Naive thymus-derived CD4-positive, alpha-beta T cell (primary cell): ENCODE measurements at regions of chr3 and their contacts with region 1.

Region 1: GRCh38 chr3:170089862-170090600 is 52.2 kb downstream of the GPR160 start:
- DNase-seq: no peak
- ATAC-seq: no peak
- H3K4me3 ChIP-seq: no peak overlapping the region
- H3K4me3 Mint-ChIP-seq: no peak overlapping the region
- H3K27ac ChIP-seq: peak overlapping the region; percentile 9
- H3K27ac Mint-ChIP-seq: peak overlapping the region in 7 of 9 donors; percentile 3 to 65 (median 54)
- H3K4me1 ChIP-seq: no peaks in the 10 kb centered on the region
- H3K4me1 Mint-ChIP-seq: peaks cover 0 to 19% (median 9%) of the 10 kb centered on the region in 7 donors
- H3K27me3 ChIP-seq: no peaks in the 10 kb centered on the region
- H3K27me3 Mint-ChIP-seq: no peaks in the 10 kb centered on the region

Region 2: DNA sequence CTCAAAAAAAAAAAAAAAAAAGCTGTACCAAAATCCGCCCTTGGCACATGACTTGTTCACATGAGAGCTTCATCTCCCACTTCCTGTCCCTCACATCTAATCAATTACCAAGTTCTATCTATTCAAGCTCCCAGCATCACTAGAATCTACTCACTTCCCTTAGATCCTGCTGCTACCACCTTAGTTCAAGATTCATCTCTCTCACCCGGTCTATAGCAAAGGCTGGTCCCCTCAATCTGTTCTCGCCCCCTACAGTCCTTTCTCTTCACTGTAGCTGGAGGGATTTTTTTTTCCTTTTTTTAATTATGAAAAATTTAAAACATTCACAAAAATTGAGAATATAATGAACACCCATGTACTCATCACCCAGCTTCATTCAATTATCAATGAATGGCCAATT is 68.9 kb before region 1 on chr3:
- CTCF ChIA-PET with region 1: no interaction called
- POLR2A ChIA-PET with region 1: no interaction called
- intact Hi-C with region 1: no loop called
- DNase-seq: peak in 6 of 9 donors; percentile 21 to 48 (median 40)
- ATAC-seq: peak; percentile 61
- H3K4me3 ChIP-seq: no peak overlapping the region
- H3K4me3 Mint-ChIP-seq: peak overlapping the region in 7 of 10 donors; percentile 3 to 71 (median 42)
- H3K27ac ChIP-seq: no peak overlapping the region
- H3K27ac Mint-ChIP-seq: peak overlapping the region in 8 of 9 donors; percentile 18 to 92 (median 73)
- H3K4me1 ChIP-seq: peaks cover 0 to 9% of the 10 kb centered on the region in 2 donors
- H3K4me1 Mint-ChIP-seq: peaks cover 10 to 64% (median 30%) of the 10 kb centered on the region in 7 donors
- H3K27me3 ChIP-seq: no peaks in the 10 kb centered on the region
- H3K27me3 Mint-ChIP-seq: peaks cover 0 to 17% (median 0%) of the 10 kb centered on the region in 5 donors

Region 3: DNA sequence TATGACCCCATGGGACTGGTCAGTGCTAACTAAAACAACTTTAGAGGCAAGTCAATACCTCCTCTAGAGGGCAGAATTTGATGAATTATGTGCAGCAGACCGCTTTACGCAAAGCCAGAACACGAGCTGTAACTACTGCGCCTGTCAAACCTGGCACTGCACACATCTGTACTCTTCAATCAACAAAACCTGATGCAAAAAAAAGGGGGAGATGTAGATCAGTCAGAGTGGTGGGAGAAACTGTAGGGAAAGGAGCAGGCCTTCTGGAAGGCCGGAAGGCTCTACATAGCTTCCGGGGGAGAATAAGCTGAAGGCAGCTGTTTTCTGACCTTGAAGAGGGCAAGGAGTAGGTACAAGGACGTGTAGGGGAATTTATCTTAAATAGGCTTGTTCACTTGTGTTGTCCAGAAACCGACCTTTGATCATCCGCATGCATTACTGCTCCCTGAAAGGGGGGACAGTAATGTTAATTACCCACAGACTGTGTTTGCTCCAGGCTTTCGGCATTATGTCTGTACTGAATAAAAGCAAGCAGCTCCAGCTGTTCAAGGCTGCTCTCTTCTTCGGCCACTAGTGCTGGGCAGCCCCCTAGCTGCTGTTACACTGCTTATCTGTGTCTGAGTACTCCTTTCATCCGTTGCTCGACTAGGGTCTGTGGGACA is 11.3 kb before region 1 on chr3:
- CTCF ChIA-PET with region 1: interaction called, 4 read pairs
- POLR2A ChIA-PET with region 1: no interaction called
- intact Hi-C with region 1: loop called in 1 of 2 experiments (anchors 1 kb)
- DNase-seq: no peak
- ATAC-seq: no peak
- H3K4me3 ChIP-seq: no peak overlapping the region
- H3K4me3 Mint-ChIP-seq: no peak overlapping the region
- H3K27ac ChIP-seq: no peak overlapping the region
- H3K27ac Mint-ChIP-seq: peak overlapping the region in 2 of 9 donors; percentile 25 to 33
- H3K4me1 ChIP-seq: no peaks in the 10 kb centered on the region
- H3K4me1 Mint-ChIP-seq: peaks cover 0 to 24% (median 7%) of the 10 kb centered on the region in 7 donors
- H3K27me3 ChIP-seq: no peaks in the 10 kb centered on the region
- H3K27me3 Mint-ChIP-seq: no peaks in the 10 kb centered on the region

Region 4: DNA sequence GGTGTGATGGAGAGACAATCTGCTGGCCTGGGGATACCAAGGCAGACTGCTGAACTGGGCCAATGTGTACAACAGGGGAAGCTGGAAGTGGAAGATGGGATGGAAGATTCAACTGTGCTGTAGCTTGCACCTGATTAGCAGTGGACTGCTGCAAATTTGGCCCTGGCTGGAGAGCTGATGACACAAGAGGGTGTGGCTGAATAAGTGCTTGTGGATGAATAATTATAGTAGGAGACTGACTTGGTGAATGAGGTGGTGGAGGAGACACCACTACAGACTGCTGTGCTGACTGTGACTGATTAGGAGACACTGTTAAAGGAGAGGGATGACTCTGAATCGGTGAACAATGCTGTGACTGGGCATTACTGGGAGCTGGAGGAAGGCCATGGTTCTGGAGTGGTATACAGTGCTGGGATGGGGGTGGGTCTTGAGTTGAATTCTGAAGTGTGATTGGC is 39.0 kb after region 1 on chr3:
- CTCF ChIA-PET with region 1: no interaction called
- POLR2A ChIA-PET with region 1: no interaction called
- intact Hi-C with region 1: loop called in 1 of 2 experiments (anchors 5 kb)
- DNase-seq: no peak
- ATAC-seq: peak; percentile 52
- H3K4me3 ChIP-seq: no peak overlapping the region
- H3K4me3 Mint-ChIP-seq: peak overlapping the region; percentile 53 to 89 (median 75)
- H3K27ac ChIP-seq: peak overlapping the region; percentile 40
- H3K27ac Mint-ChIP-seq: peak overlapping the region; percentile 50 to 88 (median 73)
- H3K4me1 ChIP-seq: peaks cover 0 to 9% of the 10 kb centered on the region in 2 donors
- H3K4me1 Mint-ChIP-seq: peaks cover 13 to 71% (median 42%) of the 10 kb centered on the region in 7 donors
- H3K27me3 ChIP-seq: no peaks in the 10 kb centered on the region
- H3K27me3 Mint-ChIP-seq: no peaks in the 10 kb centered on the region